B cell (primary cell): ENCODE measurements at regions of chr15 and their contacts with region 1.

Region 1: GRCh38 chr15:85407804-85408746 is 27.7 kb downstream of the AKAP13 start:
- DNase-seq: peak; percentile 81
- ATAC-seq: peak; percentile 65
- H3K4me3 ChIP-seq: peak overlapping the region in 4 of 5 experiments; percentile 2 to 57 (median 35)
- H3K4me3 Mint-ChIP-seq: peak overlapping the region; percentile 84
- H3K27ac ChIP-seq: peak overlapping the region; percentile 83 to 88
- H3K27ac Mint-ChIP-seq: peak overlapping the region; percentile 96
- H3K4me1 ChIP-seq: peaks cover 87 to 90% of the 10 kb centered on the region in 2 donors
- H3K4me1 Mint-ChIP-seq: peaks cover 80% of the 10 kb centered on the region
- H3K27me3 ChIP-seq: no peaks in the 10 kb centered on the region
- H3K27me3 Mint-ChIP-seq: no peaks in the 10 kb centered on the region
- CTCF ChIP-seq: no peak

Region 2: GRCh38 chr15:85312486-85312885 is 95.6 kb before region 1 on chr15:
- CTCF ChIA-PET with region 1: interaction called, 40 read pairs
- POLR2A ChIA-PET with region 1: interaction called, 3 read pairs
- intact Hi-C with region 1: loop called (anchors 1 kb)
- DNase-seq: peak; percentile 86
- ATAC-seq: peak; percentile 84
- H3K4me3 ChIP-seq: peak overlapping the region in 4 of 5 experiments; percentile 28 to 59 (median 51)
- H3K4me3 Mint-ChIP-seq: peak overlapping the region; percentile 89
- H3K27ac ChIP-seq: peak overlapping the region; percentile 87 to 97
- H3K27ac Mint-ChIP-seq: peak overlapping the region; percentile 95
- H3K4me1 ChIP-seq: peaks cover 56 to 63% of the 10 kb centered on the region in 2 donors
- H3K4me1 Mint-ChIP-seq: peaks cover 87% of the 10 kb centered on the region
- H3K27me3 ChIP-seq: no peaks in the 10 kb centered on the region
- H3K27me3 Mint-ChIP-seq: no peaks in the 10 kb centered on the region
- CTCF ChIP-seq: no peak

Region 3: GRCh38 chr15:85350395-85350794 is 57.7 kb before region 1 on chr15:
- CTCF ChIA-PET with region 1: no interaction called
- POLR2A ChIA-PET with region 1: no interaction called
- intact Hi-C with region 1: no loop called
- DNase-seq: no peak
- ATAC-seq: no peak
- H3K4me3 ChIP-seq: no peak overlapping the region
- H3K4me3 Mint-ChIP-seq: no peak overlapping the region
- H3K27ac ChIP-seq: no peak overlapping the region
- H3K27ac Mint-ChIP-seq: no peak overlapping the region
- H3K4me1 ChIP-seq: no peaks in the 10 kb centered on the region
- H3K4me1 Mint-ChIP-seq: peaks cover 8% of the 10 kb centered on the region
- H3K27me3 ChIP-seq: no peaks in the 10 kb centered on the region
- H3K27me3 Mint-ChIP-seq: no peaks in the 10 kb centered on the region
- CTCF ChIP-seq: no peak

Region 4: DNA sequence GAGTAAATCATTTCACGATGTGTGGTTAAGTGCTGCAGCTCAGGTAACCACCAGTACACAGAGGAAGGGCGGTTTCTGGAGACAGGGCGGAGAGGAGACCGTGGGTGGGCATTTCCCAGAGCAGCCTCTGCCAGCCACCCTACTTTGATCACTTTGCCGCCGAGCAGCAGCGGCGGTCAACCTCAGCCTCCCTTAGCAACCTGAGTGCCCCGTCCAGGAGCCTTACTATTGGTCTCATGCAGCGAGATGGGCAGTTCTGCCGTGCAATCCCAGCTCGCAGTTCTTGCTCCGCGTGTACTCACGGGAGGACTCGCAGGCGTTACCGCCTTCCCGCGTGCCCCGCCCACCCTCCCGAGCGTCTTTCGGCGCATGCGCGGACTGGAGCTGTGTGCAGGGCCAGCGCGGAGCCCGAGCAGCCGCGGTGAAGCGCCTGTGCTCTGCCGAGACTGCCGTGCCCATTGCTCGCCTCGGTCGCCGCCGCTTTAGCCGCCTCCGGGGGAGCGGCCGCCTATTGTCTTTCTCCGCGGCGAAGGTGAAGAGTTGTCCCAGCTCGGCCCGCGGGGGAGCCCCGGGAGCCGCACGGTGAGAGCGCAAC is 27.8 kb before region 1 on chr15 and contains the start of gene AKAP13:
- CTCF ChIA-PET with region 1: interaction called, 89 read pairs
- POLR2A ChIA-PET with region 1: interaction called, 19 read pairs
- intact Hi-C with region 1: loop called (anchors 1 kb)
- DNase-seq: peak; percentile 97
- ATAC-seq: peak; percentile 78
- H3K4me3 ChIP-seq: peak within 1 kb of the TSS; percentile 65 to 90 (median 69)
- H3K4me3 Mint-ChIP-seq: peak within 1 kb of the TSS; percentile 86
- H3K27ac ChIP-seq: peak within 1 kb of the TSS; percentile 79 to 85
- H3K27ac Mint-ChIP-seq: peak within 1 kb of the TSS; percentile 90
- H3K4me1 ChIP-seq: peaks cover 35 to 42% of the 10 kb centered on the region in 2 donors
- H3K4me1 Mint-ChIP-seq: peaks cover 44% of the 10 kb centered on the region
- H3K27me3 ChIP-seq: peaks cover 0 to 4% (median 0%) of the 10 kb centered on the region in 4 experiments
- H3K27me3 Mint-ChIP-seq: peaks cover 4% of the 10 kb centered on the region
- CTCF ChIP-seq: no peak
- total RNA-seq, gene AKAP13: 358 and 380 TPM in 2 replicates

Region 5: GRCh38 chr15:85388566-85389305 is 19.3 kb before region 1 on chr15:
- CTCF ChIA-PET with region 1: interaction called, 89 read pairs
- POLR2A ChIA-PET with region 1: interaction called, 6 read pairs
- intact Hi-C with region 1: loop called (anchors 2 kb)
- DNase-seq: no peak
- ATAC-seq: no peak
- H3K4me3 ChIP-seq: peak overlapping the region in 1 of 5 experiments; percentile 13
- H3K4me3 Mint-ChIP-seq: peak overlapping the region; percentile 73
- H3K27ac ChIP-seq: no peak overlapping the region
- H3K27ac Mint-ChIP-seq: no peak overlapping the region
- H3K4me1 ChIP-seq: peaks cover 57 to 66% of the 10 kb centered on the region in 2 donors
- H3K4me1 Mint-ChIP-seq: peaks cover 33% of the 10 kb centered on the region
- H3K27me3 ChIP-seq: no peaks in the 10 kb centered on the region
- H3K27me3 Mint-ChIP-seq: no peaks in the 10 kb centered on the region
- CTCF ChIP-seq: no peak

Region 6: GRCh38 chr15:85443593-85444087 is 35.6 kb after region 1 on chr15:
- CTCF ChIA-PET with region 1: no interaction called
- POLR2A ChIA-PET with region 1: no interaction called
- intact Hi-C with region 1: loop called (anchors 2 kb)
- DNase-seq: peak; percentile 77
- ATAC-seq: peak; percentile 71
- H3K4me3 ChIP-seq: peak overlapping the region in 1 of 5 experiments; percentile 46
- H3K4me3 Mint-ChIP-seq: peak overlapping the region; percentile 64
- H3K27ac ChIP-seq: peak overlapping the region; percentile 53 to 80
- H3K27ac Mint-ChIP-seq: peak overlapping the region; percentile 82
- H3K4me1 ChIP-seq: peaks cover 35 to 41% of the 10 kb centered on the region in 2 donors
- H3K4me1 Mint-ChIP-seq: peaks cover 68% of the 10 kb centered on the region
- H3K27me3 ChIP-seq: no peaks in the 10 kb centered on the region
- H3K27me3 Mint-ChIP-seq: no peaks in the 10 kb centered on the region
- CTCF ChIP-seq: no peak

Region 7: GRCh38 chr15:85707519-85708338 is 299.7 kb after region 1 on chr15:
- CTCF ChIA-PET with region 1: no interaction called
- POLR2A ChIA-PET with region 1: no interaction called
- intact Hi-C with region 1: loop called (anchors 10 kb)
- DNase-seq: no peak
- ATAC-seq: peak; percentile 37
- H3K4me3 ChIP-seq: peak overlapping the region; percentile 9 to 66 (median 29)
- H3K4me3 Mint-ChIP-seq: peak overlapping the region; percentile 82
- H3K27ac ChIP-seq: peak overlapping the region; percentile 96 to 99
- H3K27ac Mint-ChIP-seq: peak overlapping the region; percentile 96
- H3K4me1 ChIP-seq: peaks cover 51 to 56% of the 10 kb centered on the region in 2 donors
- H3K4me1 Mint-ChIP-seq: peaks cover 71% of the 10 kb centered on the region
- H3K27me3 ChIP-seq: no peaks in the 10 kb centered on the region
- H3K27me3 Mint-ChIP-seq: no peaks in the 10 kb centered on the region
- CTCF ChIP-seq: no peak